BJ (cell line): ENCODE measurements at regions of chr3 and their contacts with region 1.

Region 1: DNA sequence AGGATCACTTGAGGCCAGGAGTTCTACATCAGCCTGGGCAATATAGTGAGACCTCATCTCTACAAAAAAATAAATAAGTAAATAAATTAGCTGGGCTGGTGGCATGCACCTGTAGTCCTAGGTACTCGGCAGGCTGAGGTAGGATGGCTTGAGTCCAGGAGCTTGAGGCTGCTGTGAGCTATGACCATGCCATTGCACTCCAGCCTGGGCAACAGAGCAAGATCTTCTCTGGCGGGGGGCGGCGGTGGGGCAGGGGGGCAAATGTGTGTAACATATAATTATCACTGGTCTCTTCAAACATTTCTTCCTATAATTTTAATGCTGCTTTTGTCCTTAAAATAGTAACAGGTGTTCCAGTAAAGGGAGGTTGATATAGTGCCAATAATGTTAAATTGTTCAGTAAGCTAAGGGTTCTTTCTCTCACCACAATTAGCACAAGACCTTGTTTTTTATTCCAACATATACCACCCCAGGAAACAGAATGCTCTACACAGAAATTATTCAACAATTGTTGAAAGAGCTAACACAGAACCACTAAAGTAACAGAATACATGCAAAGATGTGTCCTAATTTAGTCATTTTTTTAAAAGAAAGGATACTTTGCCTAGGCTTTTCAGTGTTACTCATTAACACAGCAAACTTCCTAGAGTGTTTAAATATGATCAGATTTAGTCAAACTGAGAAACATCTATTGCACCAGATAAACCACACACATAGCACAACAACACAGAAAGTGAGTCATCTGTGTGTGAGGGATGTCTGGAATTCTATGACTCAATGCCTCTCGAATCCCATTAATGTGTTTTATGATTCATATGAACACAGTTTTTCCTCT is 29.1 kb downstream of the ANKRD28 start:
- DNase-seq: peak; percentile 90
- H3K4me3 ChIP-seq: no peak overlapping the region
- H3K27me3 ChIP-seq: no peaks in the 10 kb centered on the region
- CTCF ChIP-seq: no peak

Region 2: GRCh38 chr3:15576475-15576874 is 192.2 kb before region 1 on chr3:
- CTCF ChIA-PET with region 1: no interaction called
- POLR2A ChIA-PET with region 1: no interaction called
- DNase-seq: no peak
- H3K4me3 ChIP-seq: no peak overlapping the region
- H3K27me3 ChIP-seq: no peaks in the 10 kb centered on the region
- CTCF ChIP-seq: no peak

Region 3: DNA sequence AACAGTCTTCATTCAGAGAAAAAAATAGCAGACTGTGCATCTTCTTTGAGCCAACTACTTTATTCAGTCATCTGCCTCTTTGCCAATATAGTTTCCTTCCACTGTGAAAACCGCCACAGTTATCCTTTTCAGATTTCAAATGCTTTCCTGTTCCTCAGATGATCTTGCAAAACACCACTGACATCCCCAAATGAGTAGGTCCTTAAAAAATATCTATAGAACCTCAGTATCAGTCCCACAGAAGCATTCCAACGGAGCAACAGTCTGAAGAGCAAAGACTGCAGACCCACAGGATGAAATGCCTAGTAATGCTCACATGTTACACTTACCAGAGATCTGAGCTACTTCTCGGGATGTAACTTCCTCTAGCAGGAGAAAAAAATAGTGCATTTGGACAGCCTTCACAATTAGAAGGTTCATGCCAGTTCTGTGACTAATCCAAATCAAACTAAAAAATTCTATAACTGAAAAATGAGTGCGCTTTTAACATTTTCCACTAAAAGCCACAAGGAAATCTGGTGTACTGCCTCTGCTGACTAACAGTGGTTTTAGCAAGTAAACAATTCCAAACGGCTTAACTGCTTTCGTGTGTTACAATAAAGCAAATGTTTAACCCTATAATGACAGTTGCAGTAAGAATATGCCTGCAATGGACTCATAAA is 29.1 kb after region 1 on chr3 and contains the start of gene ANKRD28:
- CTCF ChIA-PET with region 1: no interaction called
- POLR2A ChIA-PET with region 1: interaction called, 23 read pairs
- DNase-seq: peak; percentile 97
- H3K4me3 ChIP-seq: peak within 1 kb of the TSS; percentile 80
- H3K27me3 ChIP-seq: no peaks in the 10 kb centered on the region
- CTCF ChIP-seq: peak; percentile 45
- polyA plus RNA-seq, gene ANKRD28: 50.9 and 92.5 TPM in 2 replicates